Kidney (tissue), 22 donors: ENCODE measurements at regions of chr5 and their contacts with region 1.

Region 1: DNA sequence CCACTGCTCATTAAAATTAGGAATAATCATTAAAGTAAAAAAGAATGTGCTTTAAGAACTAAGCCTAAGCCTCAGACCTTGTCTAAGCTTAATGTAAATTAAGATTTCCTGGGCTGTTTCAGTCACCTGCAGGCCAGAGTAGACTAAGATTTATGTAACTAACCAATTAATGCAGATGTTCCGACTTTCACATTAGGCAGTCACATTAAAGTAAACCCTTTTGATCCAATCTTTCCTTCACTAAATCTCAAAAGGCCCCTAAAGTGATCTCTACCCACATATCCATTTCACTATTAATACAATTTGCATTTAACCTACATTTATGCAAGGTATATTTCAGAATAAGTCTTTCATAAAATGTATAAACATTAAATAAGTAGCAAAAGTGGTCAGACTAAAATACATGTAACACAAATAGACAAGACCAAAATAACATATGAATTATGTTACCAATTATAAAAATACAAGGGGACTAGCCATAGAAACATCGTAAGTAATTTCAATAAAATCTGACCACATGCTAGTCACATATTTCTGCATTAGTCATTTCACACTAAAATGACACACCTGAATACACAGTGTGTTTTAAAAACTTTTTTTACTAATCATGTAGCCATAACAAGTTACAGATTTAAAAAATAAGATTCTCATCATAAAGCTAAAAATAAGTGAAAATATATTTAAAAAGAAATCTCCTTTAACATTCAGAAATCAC is 7.7 kb downstream of the NR3C1 start:
- DNase-seq: no peak
- H3K4me3 ChIP-seq: peak overlapping the region in 2 of 3 donors; percentile 1 to 33
- H3K27ac ChIP-seq: no peak overlapping the region
- H3K4me1 ChIP-seq: peaks cover 0 to 27% (median 0%) of the 10 kb centered on the region in 3 donors
- H3K27me3 ChIP-seq: no peaks in the 10 kb centered on the region
- CTCF ChIP-seq: no peak

Region 2: DNA sequence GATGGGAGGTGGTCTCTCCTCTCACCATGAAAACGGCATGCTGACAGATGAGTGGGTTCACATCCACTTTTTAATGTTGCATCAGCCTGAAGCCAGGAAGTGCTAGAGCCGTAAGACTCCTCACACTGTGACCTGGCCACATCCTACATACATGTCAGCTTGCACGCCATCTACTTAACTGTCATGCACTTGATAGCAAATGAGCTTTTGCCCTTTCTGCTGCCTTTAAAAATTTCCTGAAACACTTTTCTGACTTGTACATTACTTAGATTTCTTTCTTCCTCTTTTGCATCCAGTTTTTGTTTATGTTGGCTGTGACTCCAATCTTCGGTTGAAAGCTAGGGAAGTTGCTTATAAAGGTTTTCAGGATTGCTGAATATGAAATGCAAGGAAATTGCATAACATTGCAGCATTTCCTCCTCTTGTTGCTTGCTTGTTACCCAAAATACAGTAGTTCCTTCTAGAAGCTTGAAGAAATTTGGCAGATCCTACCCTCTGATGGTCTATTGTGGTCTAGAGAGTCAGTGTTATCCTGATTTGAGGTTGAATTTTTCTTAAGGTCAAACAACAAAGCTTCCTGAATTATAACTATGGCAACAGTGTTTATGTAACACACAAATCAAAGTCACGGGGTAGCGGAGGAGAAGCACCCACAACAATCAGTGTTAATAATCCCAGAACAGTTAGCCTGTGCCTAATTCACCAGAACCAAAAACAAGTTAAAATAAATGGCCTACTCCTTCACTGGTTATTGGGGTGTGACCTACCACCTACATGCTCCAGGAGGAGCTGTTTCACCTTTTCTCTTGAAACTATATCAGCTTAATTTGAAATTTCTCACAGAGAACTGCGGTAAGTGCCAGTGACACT is 393.1 kb before region 1 on chr5:
- intact Hi-C with region 1: loop called (anchors 10 kb)
- DNase-seq: peak in 3 of 5 donors; percentile 45 to 92 (median 74)
- H3K4me3 ChIP-seq: peak overlapping the region in 1 of 3 donors; percentile 30
- H3K27ac ChIP-seq: peak overlapping the region; percentile 77 to 86
- H3K4me1 ChIP-seq: peaks cover 11 to 24% (median 14%) of the 10 kb centered on the region in 3 donors
- H3K27me3 ChIP-seq: no peaks in the 10 kb centered on the region
- CTCF ChIP-seq: peak; percentile 53